Naive thymus-derived CD4-positive, alpha-beta T cell (primary cell): ENCODE measurements at regions of chr3 and their contacts with region 1.

Region 1: GRCh38 chr3:183884427-183885296 is at the start of gene PARL:
- DNase-seq: peak; percentile 88 to 99 (median 95)
- ATAC-seq: peak; percentile 100
- H3K4me3 ChIP-seq: peak within 1 kb of the TSS; percentile 85
- H3K4me3 Mint-ChIP-seq: peak within 1 kb of the TSS; percentile 89 to 98 (median 96)
- H3K27ac ChIP-seq: peak within 1 kb of the TSS; percentile 77
- H3K27ac Mint-ChIP-seq: peak within 1 kb of the TSS; percentile 86 to 96 (median 93)
- H3K4me1 ChIP-seq: peaks cover 15% of the 10 kb centered on the region in 2 donors
- H3K4me1 Mint-ChIP-seq: peaks cover 15 to 53% (median 41%) of the 10 kb centered on the region in 7 donors
- H3K27me3 ChIP-seq: no peaks in the 10 kb centered on the region
- H3K27me3 Mint-ChIP-seq: peaks cover 0 to 3% (median 0%) of the 10 kb centered on the region in 5 donors
- total RNA-seq, gene PARL: 41.6 to 50.4 (median 47.1) TPM

Region 2: DNA sequence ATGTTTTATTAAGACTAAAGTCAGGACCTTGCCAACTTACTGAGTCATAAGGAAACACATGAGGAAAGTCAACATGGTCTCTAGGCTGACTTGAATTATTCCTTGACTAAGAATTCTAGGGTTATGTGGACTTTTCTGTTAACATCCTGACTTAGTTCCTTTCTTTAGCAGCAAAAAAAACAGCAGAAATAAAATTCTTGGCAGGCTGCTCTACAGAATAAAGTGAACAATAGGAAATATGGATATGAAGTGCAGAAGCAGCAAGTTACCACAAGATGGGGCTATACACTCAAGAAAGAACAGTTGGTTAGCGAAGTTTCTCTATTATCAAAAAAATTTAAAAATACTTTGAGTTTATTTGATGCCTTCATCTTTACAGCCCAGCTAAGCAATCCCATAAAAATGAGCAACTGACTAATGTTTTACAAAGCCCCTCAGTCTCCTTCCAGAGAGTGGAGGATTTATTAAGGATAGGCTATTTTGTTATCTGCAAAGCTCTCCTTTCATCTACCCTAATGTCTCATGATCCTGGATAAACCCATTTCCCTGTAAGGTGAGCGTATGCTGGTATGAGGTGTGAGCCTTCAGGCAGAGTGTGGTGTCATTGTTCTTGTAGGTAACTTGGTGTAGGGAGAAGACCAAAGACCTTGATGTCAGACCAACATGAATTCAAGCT is 762.3 kb before region 1 on chr3:
- CTCF ChIA-PET with region 1: no interaction called
- POLR2A ChIA-PET with region 1: no interaction called
- intact Hi-C with region 1: loop called in 1 of 2 experiments (anchors 10 kb)
- DNase-seq: peak in 7 of 9 donors; percentile 15 to 60 (median 49)
- ATAC-seq: peak; percentile 75
- H3K4me3 ChIP-seq: no peak overlapping the region
- H3K4me3 Mint-ChIP-seq: no peak overlapping the region
- H3K27ac ChIP-seq: no peak overlapping the region
- H3K27ac Mint-ChIP-seq: no peak overlapping the region
- H3K4me1 ChIP-seq: no peaks in the 10 kb centered on the region
- H3K4me1 Mint-ChIP-seq: peaks cover 0 to 6% (median 0%) of the 10 kb centered on the region in 7 donors
- H3K27me3 ChIP-seq: no peaks in the 10 kb centered on the region
- H3K27me3 Mint-ChIP-seq: peaks cover 2 to 5% (median 4%) of the 10 kb centered on the region in 5 donors

Region 3: GRCh38 chr3:183766745-183767606 is 117.7 kb before region 1 on chr3:
- CTCF ChIA-PET with region 1: interaction called, 4 read pairs
- POLR2A ChIA-PET with region 1: no interaction called
- intact Hi-C with region 1: loop called in 1 of 2 experiments (anchors 1 kb)
- DNase-seq: peak; percentile 41 to 72 (median 65)
- ATAC-seq: peak; percentile 96
- H3K4me3 ChIP-seq: no peak overlapping the region
- H3K4me3 Mint-ChIP-seq: no peak overlapping the region
- H3K27ac ChIP-seq: no peak overlapping the region
- H3K27ac Mint-ChIP-seq: peak overlapping the region in 4 of 9 donors; percentile 3 to 73 (median 40)
- H3K4me1 ChIP-seq: no peaks in the 10 kb centered on the region
- H3K4me1 Mint-ChIP-seq: peaks cover 5 to 18% (median 12%) of the 10 kb centered on the region in 7 donors
- H3K27me3 ChIP-seq: no peaks in the 10 kb centered on the region
- H3K27me3 Mint-ChIP-seq: no peaks in the 10 kb centered on the region

Region 4: GRCh38 chr3:183895296-183895695 is 10.6 kb after region 1 on chr3:
- CTCF ChIA-PET with region 1: interaction called, 11 read pairs
- POLR2A ChIA-PET with region 1: interaction called, 4 read pairs
- intact Hi-C with region 1: loop called in 1 of 2 experiments (anchors 1 kb)
- DNase-seq: peak in 7 of 9 donors; percentile 19 to 67 (median 49)
- ATAC-seq: peak; percentile 91
- H3K4me3 ChIP-seq: no peak overlapping the region
- H3K4me3 Mint-ChIP-seq: no peak overlapping the region
- H3K27ac ChIP-seq: no peak overlapping the region
- H3K27ac Mint-ChIP-seq: peak overlapping the region in 1 of 9 donors; percentile 18
- H3K4me1 ChIP-seq: no peaks in the 10 kb centered on the region
- H3K4me1 Mint-ChIP-seq: peaks cover 0 to 6% (median 0%) of the 10 kb centered on the region in 7 donors
- H3K27me3 ChIP-seq: peaks cover 0 to 3% of the 10 kb centered on the region in 2 donors
- H3K27me3 Mint-ChIP-seq: peaks cover 7 to 29% (median 11%) of the 10 kb centered on the region in 5 donors

Region 5: GRCh38 chr3:184174646-184175492 is 290.2 kb after region 1 on chr3 and contains the start of gene AP2M1:
- CTCF ChIA-PET with region 1: interaction called, 3 read pairs
- POLR2A ChIA-PET with region 1: interaction called, 3 read pairs
- intact Hi-C with region 1: loop called in 1 of 2 experiments (anchors 1 kb)
- DNase-seq: peak; percentile 98 to 99 (median 98)
- ATAC-seq: peak; percentile 98
- H3K4me3 ChIP-seq: peak within 1 kb of the TSS; percentile 82
- H3K4me3 Mint-ChIP-seq: peak within 1 kb of the TSS; percentile 89 to 98 (median 96)
- H3K27ac ChIP-seq: peak within 1 kb of the TSS; percentile 95
- H3K27ac Mint-ChIP-seq: peak within 1 kb of the TSS; percentile 75 to 94 (median 90)
- H3K4me1 ChIP-seq: peaks cover 18 to 20% of the 10 kb centered on the region in 2 donors
- H3K4me1 Mint-ChIP-seq: peaks cover 14 to 46% (median 38%) of the 10 kb centered on the region in 7 donors
- H3K27me3 ChIP-seq: no peaks in the 10 kb centered on the region
- H3K27me3 Mint-ChIP-seq: no peaks in the 10 kb centered on the region
- total RNA-seq, gene AP2M1: 111 to 217 (median 185) TPM